ENCODE measurements at regions of chr9 and their contacts with region 1.

Region 1: DNA sequence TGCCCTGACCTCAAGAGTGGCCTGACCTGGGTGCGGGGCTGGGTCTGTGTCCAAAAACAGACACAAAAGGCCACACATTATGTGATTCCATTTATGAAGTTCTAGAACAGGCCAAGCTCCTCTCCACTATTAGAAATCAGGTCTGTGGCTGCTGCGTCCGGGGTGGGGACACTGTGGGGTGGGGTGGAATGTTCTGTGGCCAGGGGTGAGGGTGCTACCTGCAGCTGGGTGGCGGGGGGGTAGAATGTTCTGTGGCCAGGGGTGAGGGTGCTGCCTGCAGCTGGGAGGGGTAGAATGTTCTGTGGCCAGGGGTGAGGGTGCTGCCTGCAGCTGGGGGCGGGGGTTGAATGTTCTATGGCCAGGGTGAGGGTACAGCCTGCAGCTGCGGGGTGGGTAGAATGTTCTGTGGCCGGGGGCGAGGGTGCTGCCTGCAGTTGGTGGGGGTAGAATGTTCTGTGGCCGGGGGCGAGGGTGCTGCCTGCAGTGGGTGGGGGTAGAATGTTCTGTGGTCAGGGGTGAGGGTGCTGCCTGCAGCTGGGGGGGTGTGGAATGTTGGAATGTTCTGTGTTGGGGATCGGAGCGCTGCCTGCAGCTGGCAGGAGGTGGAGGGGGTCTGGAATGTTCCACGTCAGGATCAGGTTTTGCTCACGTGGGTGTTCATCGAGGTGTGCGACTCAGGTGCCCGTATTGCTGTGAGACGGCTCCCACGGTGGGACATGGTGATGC is 8.3 kb downstream of the LCN12 start:
- DNase-seq: no peak
- ATAC-seq: peak; percentile 67 to 80
- H3K4me3 Mint-ChIP-seq: peak overlapping the region in 9 of 10 donors; percentile 18 to 82 (median 69)
- H3K27ac Mint-ChIP-seq: peak overlapping the region; percentile 58 to 94 (median 88)
- H3K4me1 Mint-ChIP-seq: peaks cover 15 to 63% (median 49%) of the 10 kb centered on the region in 4 donors
- H3K27me3 Mint-ChIP-seq: no peaks in the 10 kb centered on the region

Region 2: GRCh38 chr9:136949817-136950655 is 10.3 kb before region 1 on chr9:
- POLR2A ChIA-PET with region 1: interaction called, 12 read pairs
- DNase-seq: peak; percentile 94 to 99 (median 96)
- ATAC-seq: peak; percentile 96 to 98
- H3K4me3 Mint-ChIP-seq: peak overlapping the region; percentile 77 to 93 (median 86)
- H3K27ac Mint-ChIP-seq: peak overlapping the region; percentile 67 to 96 (median 90)
- H3K4me1 Mint-ChIP-seq: peaks cover 6 to 18% (median 17%) of the 10 kb centered on the region in 4 donors
- H3K27me3 Mint-ChIP-seq: no peaks in the 10 kb centered on the region

Measured in naive thymus-derived CD8-positive, alpha-beta T cell (primary cell).